ENCODE measurements at regions of chr13 and their contacts with region 1.

Region 1: DNA sequence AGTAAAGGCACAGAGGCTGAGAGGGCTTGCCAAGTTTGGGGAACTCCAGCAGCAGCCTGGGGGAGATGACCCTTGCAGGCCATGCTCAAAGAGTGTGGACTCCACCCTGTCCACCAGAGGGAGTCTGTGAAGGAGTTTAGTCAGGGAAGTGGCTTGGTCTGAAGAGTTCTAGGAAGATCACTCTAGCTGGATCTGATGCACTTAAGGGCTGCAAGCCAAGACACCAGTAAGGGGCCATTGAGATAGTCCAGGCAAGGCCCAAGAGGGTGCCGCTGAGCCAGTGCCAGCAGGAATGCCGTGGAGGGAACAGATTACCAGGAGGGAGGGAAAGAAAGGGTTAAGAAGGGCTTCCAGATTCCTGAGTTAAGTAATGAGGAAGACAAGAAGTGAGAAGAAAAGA is 68.7 kb downstream of the ZAR1L start:
- DNase-seq: peak; percentile 82
- H3K4me3 ChIP-seq: no peak overlapping the region
- H3K27ac ChIP-seq: no peak overlapping the region
- H3K4me1 ChIP-seq: peaks cover 3% of the 10 kb centered on the region
- H3K27me3 ChIP-seq: no peaks in the 10 kb centered on the region
- CTCF ChIP-seq: peak; percentile 81 to 83
- POLR2A ChIP-seq: no peak

Region 2: DNA sequence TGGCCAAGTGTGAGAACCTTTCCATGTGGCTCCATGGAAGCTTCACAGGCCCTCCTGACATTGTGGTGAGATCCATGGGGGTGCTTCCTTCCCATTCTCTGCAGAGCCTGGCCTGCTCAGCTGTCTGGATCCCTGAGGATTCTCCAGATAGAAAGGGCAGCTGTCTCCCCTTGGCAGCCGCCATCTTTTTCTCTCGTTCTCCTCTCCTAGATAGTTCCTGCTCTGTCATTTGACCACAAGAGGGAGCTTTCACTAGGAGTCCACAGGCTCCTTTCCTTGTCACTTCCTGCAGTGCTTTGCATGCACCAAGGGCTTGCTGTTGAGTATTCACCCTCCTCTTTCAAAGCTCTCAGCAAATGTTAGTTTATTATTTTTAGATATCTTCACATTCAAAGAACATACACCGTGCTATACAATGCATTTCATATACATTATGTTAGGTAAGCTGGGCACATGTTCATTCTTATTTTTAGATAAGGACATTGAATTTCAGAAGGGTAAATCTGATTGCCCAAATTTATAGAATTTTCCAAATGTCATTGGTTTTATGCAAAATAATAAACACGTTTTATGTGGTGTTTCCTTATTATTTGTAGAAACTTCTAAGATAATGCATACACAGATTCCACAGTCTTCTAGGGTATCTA is 81.7 kb before region 1 on chr13:
- CTCF ChIA-PET with region 1: interaction called, 18 read pairs
- POLR2A ChIA-PET with region 1: no interaction called
- dilution Hi-C with region 1: no loop called
- intact Hi-C with region 1: no loop called
- DNase-seq: peak; percentile 51
- H3K4me3 ChIP-seq: no peak overlapping the region
- H3K27ac ChIP-seq: no peak overlapping the region
- H3K4me1 ChIP-seq: no peaks in the 10 kb centered on the region
- H3K27me3 ChIP-seq: no peaks in the 10 kb centered on the region
- CTCF ChIP-seq: peak; percentile 65 to 66
- POLR2A ChIP-seq: no peak

Region 3: DNA sequence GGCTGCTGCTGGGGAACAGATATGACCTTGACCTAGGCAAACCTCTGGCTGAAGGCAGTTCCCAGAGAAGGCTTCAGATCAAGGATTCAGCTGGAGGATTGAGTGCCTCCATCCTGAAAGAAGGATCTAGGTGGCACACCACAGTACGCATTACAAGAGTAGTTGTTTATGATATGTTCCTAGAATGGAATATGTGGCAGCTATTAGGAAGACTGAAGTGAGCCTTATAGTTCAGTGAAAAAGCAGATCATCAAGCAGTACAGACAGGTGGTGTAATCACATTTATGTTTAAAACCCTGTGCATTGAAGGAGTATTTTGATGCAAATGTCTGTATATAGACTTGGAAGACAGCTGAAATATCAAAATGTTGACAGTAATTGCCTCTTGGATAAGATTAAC is 47.3 kb before region 1 on chr13:
- CTCF ChIA-PET with region 1: no interaction called
- POLR2A ChIA-PET with region 1: no interaction called
- dilution Hi-C with region 1: no loop called
- intact Hi-C with region 1: no loop called
- DNase-seq: no peak
- H3K4me3 ChIP-seq: no peak overlapping the region
- H3K27ac ChIP-seq: no peak overlapping the region
- H3K4me1 ChIP-seq: no peaks in the 10 kb centered on the region
- H3K27me3 ChIP-seq: no peaks in the 10 kb centered on the region
- CTCF ChIP-seq: no peak
- POLR2A ChIP-seq: no peak

Region 4: GRCh38 chr13:32267836-32268439 is 21.5 kb after region 1 on chr13:
- CTCF ChIA-PET with region 1: interaction called, 23 read pairs
- POLR2A ChIA-PET with region 1: no interaction called
- dilution Hi-C with region 1: no loop called
- intact Hi-C with region 1: no loop called
- DNase-seq: peak; percentile 47
- H3K4me3 ChIP-seq: no peak overlapping the region
- H3K27ac ChIP-seq: no peak overlapping the region
- H3K4me1 ChIP-seq: peaks cover 71% of the 10 kb centered on the region
- H3K27me3 ChIP-seq: no peaks in the 10 kb centered on the region
- CTCF ChIP-seq: peak; percentile 26 to 58
- POLR2A ChIP-seq: no peak

Region 5: DNA sequence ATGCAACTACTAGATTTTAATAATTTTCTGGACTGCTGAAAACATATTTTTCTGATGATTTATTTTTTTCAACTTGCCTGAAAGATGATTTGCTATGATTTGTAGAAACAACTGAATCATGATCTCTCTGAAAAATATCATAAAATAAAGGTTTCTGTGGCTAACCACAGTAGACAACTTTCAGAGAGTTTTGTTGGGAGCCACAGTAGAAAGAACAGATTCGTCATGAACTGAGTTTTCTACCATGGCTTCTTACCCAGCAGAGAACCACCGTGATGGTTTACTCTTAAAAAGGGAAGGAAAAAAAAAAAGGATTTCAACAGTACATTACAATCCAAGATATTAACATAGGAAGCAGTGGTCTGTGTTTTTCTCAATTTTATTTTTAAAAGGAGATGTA is 50.7 kb after region 1 on chr13:
- CTCF ChIA-PET with region 1: interaction called, 16 read pairs
- POLR2A ChIA-PET with region 1: no interaction called
- dilution Hi-C with region 1: no loop called
- intact Hi-C with region 1: no loop called
- DNase-seq: no peak
- H3K4me3 ChIP-seq: no peak overlapping the region
- H3K27ac ChIP-seq: no peak overlapping the region
- H3K4me1 ChIP-seq: peaks cover 9% of the 10 kb centered on the region
- H3K27me3 ChIP-seq: no peaks in the 10 kb centered on the region
- CTCF ChIP-seq: no peak
- POLR2A ChIP-seq: no peak

Region 6: DNA sequence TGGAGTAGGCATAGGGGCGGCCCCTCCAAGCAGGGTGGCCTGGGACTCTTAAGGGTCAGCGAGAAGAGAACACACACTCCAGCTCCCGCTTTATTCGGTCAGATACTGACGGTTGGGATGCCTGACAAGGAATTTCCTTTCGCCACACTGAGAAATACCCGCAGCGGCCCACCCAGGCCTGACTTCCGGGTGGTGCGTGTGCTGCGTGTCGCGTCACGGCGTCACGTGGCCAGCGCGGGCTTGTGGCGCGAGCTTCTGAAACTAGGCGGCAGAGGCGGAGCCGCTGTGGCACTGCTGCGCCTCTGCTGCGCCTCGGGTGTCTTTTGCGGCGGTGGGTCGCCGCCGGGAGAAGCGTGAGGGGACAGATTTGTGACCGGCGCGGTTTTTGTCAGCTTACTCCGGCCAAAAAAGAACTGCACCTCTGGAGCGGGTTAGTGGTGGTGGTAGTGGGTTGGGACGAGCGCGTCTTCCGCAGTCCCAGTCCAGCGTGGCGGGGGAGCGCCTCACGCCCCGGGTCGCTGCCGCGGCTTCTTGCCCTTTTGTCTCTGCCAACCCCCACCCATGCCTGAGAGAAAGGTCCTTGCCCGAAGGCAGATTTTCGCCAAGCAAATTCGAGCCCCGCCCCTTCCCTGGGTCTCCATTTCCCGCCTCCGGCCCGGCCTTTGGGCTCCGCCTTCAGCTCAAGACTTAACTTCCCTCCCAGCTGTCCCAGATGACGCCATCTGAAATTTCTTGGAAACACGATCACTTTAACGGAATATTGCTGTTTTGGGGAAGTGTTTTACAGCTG is 69.0 kb after region 1 on chr13 and contains the starts of genes BRCA2 and ZAR1L:
- CTCF ChIA-PET with region 1: interaction called, 31 read pairs
- POLR2A ChIA-PET with region 1: no interaction called
- dilution Hi-C with region 1: no loop called
- intact Hi-C with region 1: loop called (anchors 1 kb)
- DNase-seq: peak; percentile 86
- H3K4me3 ChIP-seq: peak within 1 kb of the TSS; percentile 37 to 96 (median 56)
- H3K27ac ChIP-seq: peak within 1 kb of the TSS; percentile 88
- H3K4me1 ChIP-seq: peaks cover 14% of the 10 kb centered on the region
- H3K27me3 ChIP-seq: no peaks in the 10 kb centered on the region
- CTCF ChIP-seq: no peak
- POLR2A ChIP-seq: peak; percentile 53
- total RNA-seq, gene BRCA2: 16.1 and 17.5 TPM in 2 replicates
- total RNA-seq, gene ZAR1L: not detected in 2 replicates

Region 7: DNA sequence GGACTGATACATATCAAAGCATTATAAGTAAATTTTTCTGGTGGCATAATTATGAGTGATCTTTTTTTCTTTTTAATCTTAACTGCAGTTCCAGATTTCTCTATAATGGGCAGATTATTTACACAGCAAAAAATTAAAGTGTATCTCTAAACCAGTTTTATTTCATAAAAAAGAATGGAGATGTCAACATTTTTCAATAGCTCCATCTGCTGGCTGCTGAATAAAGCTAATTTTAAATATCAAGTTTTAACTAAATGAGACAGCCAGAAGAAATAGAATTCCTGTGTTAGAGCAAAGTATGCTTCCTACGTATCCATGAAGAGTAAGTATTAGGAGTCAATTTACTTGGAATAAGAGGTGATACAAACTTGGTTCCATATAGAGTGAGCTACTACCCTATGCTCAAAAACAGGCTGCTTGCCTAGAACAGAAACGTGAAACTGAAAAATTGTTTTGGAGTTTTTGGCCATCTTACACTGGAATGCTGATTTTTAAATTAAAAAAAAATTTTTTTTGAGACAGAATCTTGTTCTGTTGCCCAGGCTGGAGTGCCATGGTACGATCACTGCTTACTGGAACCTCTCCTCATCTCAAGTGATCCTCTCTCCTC is 334.8 kb after region 1 on chr13:
- CTCF ChIA-PET with region 1: interaction called, 12 read pairs
- POLR2A ChIA-PET with region 1: no interaction called
- dilution Hi-C with region 1: no loop called
- intact Hi-C with region 1: no loop called
- DNase-seq: peak; percentile 26
- H3K4me3 ChIP-seq: no peak overlapping the region
- H3K27ac ChIP-seq: no peak overlapping the region
- H3K4me1 ChIP-seq: peaks cover 10% of the 10 kb centered on the region
- H3K27me3 ChIP-seq: peaks cover 0 to 1% of the 10 kb centered on the region in 2 experiments
- CTCF ChIP-seq: peak; percentile 21 to 26
- POLR2A ChIP-seq: no peak

Measured in endothelial cell of umbilical vein (primary cell).